ENCODE measurements at regions of chr9 and their contacts with region 1.

Region 1: DNA sequence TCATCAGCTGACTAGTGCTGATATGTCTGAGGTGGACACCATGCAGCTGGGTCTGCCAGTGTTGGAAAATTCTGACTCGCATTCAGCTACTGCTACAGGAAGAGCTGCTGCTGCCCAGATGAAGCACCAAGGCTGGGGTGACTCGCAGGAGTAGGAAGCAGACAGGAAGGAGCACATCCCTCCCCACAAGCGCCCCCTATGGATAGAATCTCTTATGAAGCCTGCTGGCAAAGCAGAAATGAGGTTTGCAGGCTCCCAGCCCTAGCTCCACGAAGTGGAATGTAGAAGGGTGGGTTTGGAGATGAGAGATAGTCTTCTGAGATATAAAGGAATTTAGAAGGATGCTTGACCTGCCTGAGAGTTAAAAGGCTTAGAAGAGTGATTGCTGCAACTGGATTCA is 443.0 kb downstream of the ACTL7B start:
- DNase-seq: no peak
- ATAC-seq: peak; percentile 34; the same call in 1 of the 2 replicates
- H3K4me3 ChIP-seq: no peak overlapping the region
- H3K27ac ChIP-seq: no peak overlapping the region
- H3K4me1 ChIP-seq: no peaks in the 10 kb centered on the region
- H3K27me3 ChIP-seq: no peaks in the 10 kb centered on the region
- CTCF ChIP-seq: peak in 2 of 3 experiments; percentile 20 to 34; a peak in 1 of 6 replicates
- POLR2A ChIP-seq: no peak
- RAD21 ChIP-seq: peak; percentile 9; the same call in 1 of the 2 replicates

Region 2: DNA sequence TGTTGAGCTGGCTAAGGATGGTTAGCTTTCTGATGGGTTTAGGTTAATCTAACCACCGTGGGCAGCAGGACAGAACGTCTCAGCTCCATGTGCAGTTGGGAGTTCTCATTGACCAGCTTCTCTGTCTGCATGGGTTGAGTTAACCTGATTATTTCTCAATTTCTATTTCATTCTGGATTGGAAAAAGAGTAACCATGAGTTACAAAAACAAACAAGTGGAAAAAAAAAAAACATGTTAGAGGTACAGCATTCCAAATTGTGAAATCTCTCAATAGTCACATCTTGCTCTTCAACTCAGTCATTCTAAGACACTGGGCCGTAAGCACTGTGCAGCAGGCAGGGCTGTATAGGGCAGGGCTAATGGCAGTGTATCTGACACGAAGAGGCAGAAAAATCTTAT is 579.5 kb before region 1 on chr9:
- CTCF ChIA-PET with region 1: no interaction called
- POLR2A ChIA-PET with region 1: no interaction called
- RAD21 ChIA-PET with region 1: no interaction called
- intact Hi-C with region 1: no loop called
- DNase-seq: no peak
- ATAC-seq: no peak
- H3K4me3 ChIP-seq: no peak overlapping the region
- H3K27ac ChIP-seq: no peak overlapping the region
- H3K4me1 ChIP-seq: no peaks in the 10 kb centered on the region
- H3K27me3 ChIP-seq: no peaks in the 10 kb centered on the region
- CTCF ChIP-seq: no peak
- POLR2A ChIP-seq: no peak
- RAD21 ChIP-seq: no peak

Region 3: GRCh38 chr9:108168236-108168850 is 244.4 kb before region 1 on chr9:
- CTCF ChIA-PET with region 1: no interaction called
- POLR2A ChIA-PET with region 1: no interaction called
- RAD21 ChIA-PET with region 1: no interaction called
- intact Hi-C with region 1: no loop called
- DNase-seq: no peak
- ATAC-seq: no peak
- H3K4me3 ChIP-seq: no peak overlapping the region
- H3K27ac ChIP-seq: no peak overlapping the region
- H3K4me1 ChIP-seq: peaks cover 3 to 12% of the 10 kb centered on the region in 2 experiments; a peak in 3 of 4 replicates
- H3K27me3 ChIP-seq: no peaks in the 10 kb centered on the region
- CTCF ChIP-seq: no peak
- POLR2A ChIP-seq: no peak
- RAD21 ChIP-seq: no peak

Region 4: GRCh38 chr9:108382310-108382709 is 30.4 kb before region 1 on chr9:
- CTCF ChIA-PET with region 1: no interaction called
- POLR2A ChIA-PET with region 1: no interaction called
- RAD21 ChIA-PET with region 1: no interaction called
- intact Hi-C with region 1: no loop called
- DNase-seq: no peak
- ATAC-seq: no peak
- H3K4me3 ChIP-seq: no peak overlapping the region
- H3K27ac ChIP-seq: no peak overlapping the region
- H3K4me1 ChIP-seq: no peaks in the 10 kb centered on the region
- H3K27me3 ChIP-seq: no peaks in the 10 kb centered on the region
- CTCF ChIP-seq: no peak
- POLR2A ChIP-seq: no peak
- RAD21 ChIP-seq: no peak

Region 5: GRCh38 chr9:108761655-108762347 is 349.0 kb after region 1 on chr9:
- CTCF ChIA-PET with region 1: interaction called, 6 read pairs
- POLR2A ChIA-PET with region 1: no interaction called
- RAD21 ChIA-PET with region 1: no interaction called
- intact Hi-C with region 1: loop called (anchors 10 kb)
- DNase-seq: peak; percentile 33
- ATAC-seq: peak; percentile 95
- H3K4me3 ChIP-seq: no peak overlapping the region
- H3K27ac ChIP-seq: no peak overlapping the region
- H3K4me1 ChIP-seq: no peaks in the 10 kb centered on the region
- H3K27me3 ChIP-seq: no peaks in the 10 kb centered on the region
- CTCF ChIP-seq: peak; percentile 70 to 93 (median 80); a peak in 5 of 6 replicates
- POLR2A ChIP-seq: no peak
- RAD21 ChIP-seq: peak; percentile 94